HepG2 (cell line): ENCODE measurements at regions of chr21 and their contacts with region 1.

Region 1: GRCh38 chr21:34614633-34615486 is at the start of gene RCAN1:
- DNase-seq: peak; percentile 89
- ATAC-seq: peak; percentile 97
- H3K4me3 ChIP-seq: peak within 1 kb of the TSS; percentile 58 to 89 (median 88)
- H3K27ac ChIP-seq: peak within 1 kb of the TSS; percentile 34
- H3K4me1 ChIP-seq: peaks cover 32% of the 10 kb centered on the region
- H3K27me3 ChIP-seq: peaks cover 0 to 22% of the 10 kb centered on the region in 2 experiments; a peak in 2 of 5 replicates
- CTCF ChIP-seq: no peak
- EP300 ChIP-seq: no peak
- POLR2A ChIP-seq: no peak
- RAD21 ChIP-seq: no peak
- total RNA-seq, gene RCAN1: 34.1 and 35.1 TPM in 2 replicates

Region 2: GRCh38 chr21:34520764-34521508 is 93.9 kb before region 1 on chr21:
- CTCF ChIA-PET with region 1: no interaction called
- POLR2A ChIA-PET with region 1: interaction called, 3 read pairs
- in situ Hi-C with region 1: no loop called
- intact Hi-C with region 1: loop called (anchors 1 kb)
- DNase-seq: no peak
- ATAC-seq: no peak
- H3K4me3 ChIP-seq: 0 out of 6 replicates have a peak overlapping the region, but pooled peaks of 1 of the 3 experiments have one; percentile 57
- H3K27ac ChIP-seq: peak overlapping the region; percentile 85
- H3K4me1 ChIP-seq: peaks cover 57% of the 10 kb centered on the region
- H3K27me3 ChIP-seq: no peaks in the 10 kb centered on the region
- CTCF ChIP-seq: no peak
- EP300 ChIP-seq: no peak
- POLR2A ChIP-seq: no peak
- RAD21 ChIP-seq: no peak